ENCODE measurements at regions of chr22 and their contacts with region 1.

Region 1: GRCh38 chr22:40044102-40044869 is 49.5 kb downstream of the FAM83F start:
- DNase-seq: peak; percentile 99

Region 2: DNA sequence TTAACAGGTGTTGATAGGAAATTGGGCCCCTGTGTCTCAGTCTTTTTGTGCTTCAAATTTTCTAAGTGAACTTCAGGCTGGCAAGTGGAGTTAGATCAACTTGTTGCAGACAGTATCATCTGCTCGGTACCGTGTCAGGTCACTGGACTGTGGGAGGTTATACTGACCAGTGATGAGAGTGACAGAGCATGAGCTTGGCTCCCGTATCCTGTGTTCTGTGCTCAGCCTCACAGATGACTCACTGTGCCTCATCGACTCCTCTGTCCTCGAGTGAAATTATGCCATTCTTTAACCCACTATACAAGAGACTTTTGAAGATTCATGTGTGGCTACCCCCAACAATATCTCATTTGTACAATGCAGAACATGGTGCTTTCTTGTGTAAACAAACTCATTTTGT is 135.5 kb before region 1 on chr22:
- intact Hi-C with region 1: no loop called
- DNase-seq: no peak

Region 3: GRCh38 chr22:40346178-40347118 is 302.2 kb after region 1 on chr22 and contains the start of gene ADSL:
- intact Hi-C with region 1: loop called in 1 of 2 experiments (anchors 10 kb)
- DNase-seq: peak; percentile 97
- total RNA-seq, gene ADSL: 35.5 to 47.1 TPM

Region 4: GRCh38 chr22:40524392-40525150 is 480.3 kb after region 1 on chr22:
- intact Hi-C with region 1: loop called in 1 of 2 experiments (anchors 5 kb)
- DNase-seq: no peak